ENCODE measurements at regions of chr4 and their contacts with region 1.

Region 1: DNA sequence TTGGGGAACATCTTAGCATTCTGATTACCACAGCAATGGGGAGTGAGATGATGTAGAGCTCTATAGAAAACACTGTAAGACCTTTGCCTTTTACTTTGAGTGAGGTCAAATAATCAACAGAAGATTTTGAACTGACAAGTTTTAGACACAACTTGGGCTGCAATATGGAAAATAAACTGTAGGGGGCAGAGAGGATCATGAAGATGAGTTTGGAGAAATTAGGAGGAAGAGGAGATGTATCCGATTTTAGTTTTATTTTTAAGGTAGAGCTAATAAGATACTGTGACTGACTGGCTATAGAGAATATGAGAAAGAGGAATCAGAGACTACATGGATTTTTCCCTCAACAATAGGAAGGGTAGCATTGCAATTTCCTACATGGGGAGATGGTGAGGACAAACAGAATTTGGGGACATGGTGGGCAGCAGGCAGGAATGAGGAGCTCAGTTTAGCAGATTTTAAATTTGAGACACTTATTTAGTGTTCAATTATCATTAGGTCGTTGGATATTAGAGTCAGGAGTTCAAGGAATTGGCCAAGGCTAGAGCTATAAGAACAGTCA is 563.1 kb downstream of the INPP4B start:
- DNase-seq: no peak
- H3K4me3 Mint-ChIP-seq: no peak overlapping the region
- H3K27ac Mint-ChIP-seq: no peak overlapping the region
- H3K4me1 Mint-ChIP-seq: peaks cover 5% of the 10 kb centered on the region
- H3K27me3 Mint-ChIP-seq: no peaks in the 10 kb centered on the region

Region 2: GRCh38 chr4:140769209-140769608 is 1513.7 kb before region 1 on chr4:
- intact Hi-C with region 1: no loop called
- DNase-seq: no peak
- H3K4me3 Mint-ChIP-seq: no peak overlapping the region
- H3K27ac Mint-ChIP-seq: no peak overlapping the region
- H3K4me1 Mint-ChIP-seq: no peaks in the 10 kb centered on the region
- H3K27me3 Mint-ChIP-seq: peaks cover 17% of the 10 kb centered on the region

Region 3: DNA sequence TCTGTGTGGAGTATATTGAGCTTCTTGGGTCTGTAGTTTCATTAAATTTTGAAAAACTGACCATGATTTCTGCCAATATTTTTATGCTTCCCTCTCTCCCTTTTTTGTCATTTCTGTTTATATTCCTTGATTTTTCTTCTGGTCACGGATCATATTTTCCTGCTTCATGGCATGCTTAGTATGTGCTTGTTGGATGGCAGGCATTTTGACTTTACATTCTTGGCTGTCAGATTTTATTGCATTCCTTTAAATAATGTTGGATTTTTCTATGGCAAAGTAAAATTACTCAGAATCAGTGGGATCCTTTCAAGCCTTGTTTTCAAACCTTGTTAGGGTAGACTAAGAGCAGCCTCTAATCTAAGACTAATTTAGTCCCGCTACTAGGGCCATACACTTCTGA is 114.8 kb before region 1 on chr4:
- intact Hi-C with region 1: no loop called
- DNase-seq: no peak
- H3K4me3 Mint-ChIP-seq: no peak overlapping the region
- H3K27ac Mint-ChIP-seq: no peak overlapping the region
- H3K4me1 Mint-ChIP-seq: no peaks in the 10 kb centered on the region
- H3K27me3 Mint-ChIP-seq: no peaks in the 10 kb centered on the region

Region 4: GRCh38 chr4:142719854-142720541 is 437.0 kb after region 1 on chr4:
- intact Hi-C with region 1: loop called (anchors 1 kb)
- DNase-seq: no peak
- H3K4me3 Mint-ChIP-seq: no peak overlapping the region
- H3K27ac Mint-ChIP-seq: no peak overlapping the region
- H3K4me1 Mint-ChIP-seq: peaks cover 7% of the 10 kb centered on the region
- H3K27me3 Mint-ChIP-seq: no peaks in the 10 kb centered on the region

Region 5: GRCh38 chr4:142840516-142841123 is 557.7 kb after region 1 on chr4:
- intact Hi-C with region 1: loop called (anchors 1 kb)
- DNase-seq: no peak
- H3K4me3 Mint-ChIP-seq: no peak overlapping the region
- H3K27ac Mint-ChIP-seq: no peak overlapping the region
- H3K4me1 Mint-ChIP-seq: peaks cover 11% of the 10 kb centered on the region
- H3K27me3 Mint-ChIP-seq: peaks cover 7% of the 10 kb centered on the region

Measured in activated T-helper 1 cell treated with anti-CD3 and anti-CD28 coated beads, Interleukin-12 subunit alpha, Interleukin-12 subunit beta, Interleukin-2, Interleukin-4 antibody, amounts not matched to agents 30 ng/mL and 10 ng/mL and 1 ng/mL, durations not matched to agents 14 hours and 24 hours and 36 hours (primary cell).